PC-3 (cell line): ENCODE measurements at regions of chr3 and their contacts with region 1.

Region 1: GRCh38 chr3:160686955-160687535 is 10.1 kb downstream of the ARL14 start:
- DNase-seq: peak; percentile 59
- ATAC-seq: 0 out of 2 replicates have a peak, but pooled peaks have one; percentile 33
- H3K4me3 ChIP-seq: no peak overlapping the region
- H3K27ac ChIP-seq: no peak overlapping the region
- H3K4me1 ChIP-seq: no peaks in the 10 kb centered on the region
- H3K27me3 ChIP-seq: no peaks in the 10 kb centered on the region
- CTCF ChIP-seq: peak; percentile 82

Region 2: DNA sequence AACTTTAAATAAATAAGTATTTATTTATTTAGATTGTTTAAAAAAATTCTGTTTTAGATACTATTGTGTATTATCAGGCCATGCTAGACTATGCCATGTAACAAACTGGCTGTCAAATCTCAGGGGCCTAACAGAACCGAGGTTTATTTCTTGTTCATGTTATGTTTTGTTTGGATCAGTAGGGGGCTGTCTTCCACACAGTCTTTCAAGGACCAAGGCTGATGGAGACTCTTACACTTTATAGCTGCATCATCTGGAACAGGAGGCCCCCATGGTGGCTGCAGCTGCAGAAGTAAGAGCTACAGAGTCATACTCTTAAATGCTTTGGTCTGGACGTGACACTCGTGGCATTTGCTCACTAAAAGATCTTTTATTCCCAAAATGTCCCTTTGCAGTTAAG is 43.1 kb before region 1 on chr3:
- CTCF ChIA-PET with region 1: no interaction called
- POLR2A ChIA-PET with region 1: no interaction called
- intact Hi-C with region 1: loop called (anchors 5 kb)
- DNase-seq: peak; percentile 53
- ATAC-seq: peak; percentile 53; the same call in 1 of the 2 replicates
- H3K4me3 ChIP-seq: no peak overlapping the region
- H3K27ac ChIP-seq: no peak overlapping the region
- H3K4me1 ChIP-seq: peaks cover 19% of the 10 kb centered on the region
- H3K27me3 ChIP-seq: no peaks in the 10 kb centered on the region
- CTCF ChIP-seq: peak; percentile 60; the same call in 1 of the 2 replicates

Region 3: GRCh38 chr3:160676547-160677303 is 10.3 kb before region 1 on chr3 and contains the start of gene ARL14:
- CTCF ChIA-PET with region 1: no interaction called
- POLR2A ChIA-PET with region 1: interaction called, 12 read pairs
- intact Hi-C with region 1: no loop called
- DNase-seq: peak; percentile 98
- ATAC-seq: peak; percentile 93
- H3K4me3 ChIP-seq: peak within 1 kb of the TSS; percentile 58
- H3K27ac ChIP-seq: peak within 1 kb of the TSS; percentile 91
- H3K4me1 ChIP-seq: peaks cover 59% of the 10 kb centered on the region
- H3K27me3 ChIP-seq: no peaks in the 10 kb centered on the region
- CTCF ChIP-seq: no peak
- total RNA-seq, gene ARL14: 3.9 and 4.2 TPM in 2 replicates